ENCODE measurements at regions of chr6 and their contacts with region 1.

Region 1: DNA sequence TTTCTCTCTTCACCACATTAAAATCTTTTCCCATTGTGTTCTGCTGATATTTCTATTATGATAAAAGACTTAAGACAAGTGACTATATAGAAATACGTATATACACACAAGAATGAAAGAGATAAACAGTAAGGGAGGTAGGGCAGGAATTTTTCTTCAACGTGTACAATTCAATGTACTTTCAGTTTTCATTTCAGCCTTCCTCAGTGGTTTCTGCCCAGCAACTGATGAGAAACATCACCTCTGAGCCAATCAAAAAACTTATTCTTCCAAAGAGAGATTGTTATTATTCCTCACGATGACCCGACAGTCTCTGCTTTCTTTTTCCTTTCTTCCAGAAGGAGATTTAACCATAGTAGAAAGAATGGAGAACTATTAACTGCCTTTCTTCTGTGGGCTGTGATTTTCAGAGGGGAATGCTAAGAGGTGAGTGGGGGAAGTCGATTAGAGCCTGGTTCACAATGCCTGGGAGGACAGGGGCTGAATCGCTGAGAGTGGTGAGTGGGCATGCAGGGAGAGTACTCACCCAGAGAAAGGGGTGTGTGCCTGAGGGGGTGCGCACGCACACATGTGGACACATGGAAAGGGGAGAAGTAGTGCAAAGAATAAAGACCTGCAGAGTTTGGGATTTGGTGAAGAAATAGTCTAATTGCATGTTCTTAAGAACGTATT is at the start of gene BTN3A1:
- DNase-seq: peak; percentile 70
- ATAC-seq: peak; percentile 97
- H3K4me3 ChIP-seq: peak within 1 kb of the TSS; percentile 96
- H3K27ac ChIP-seq: peak within 1 kb of the TSS; percentile 72
- H3K4me1 ChIP-seq: peaks cover 5% of the 10 kb centered on the region; the same call in 1 of the 2 replicates
- H3K27me3 ChIP-seq: no peaks in the 10 kb centered on the region
- CTCF ChIP-seq: no peak
- POLR2A ChIP-seq: peak; percentile 46; the same call in 1 of the 2 replicates
- RAD21 ChIP-seq: 0 out of 2 replicates have a peak, but pooled peaks have one; percentile 13
- total RNA-seq, gene BTN3A1: 15.3 and 16.5 TPM in 2 replicates

Region 2: DNA sequence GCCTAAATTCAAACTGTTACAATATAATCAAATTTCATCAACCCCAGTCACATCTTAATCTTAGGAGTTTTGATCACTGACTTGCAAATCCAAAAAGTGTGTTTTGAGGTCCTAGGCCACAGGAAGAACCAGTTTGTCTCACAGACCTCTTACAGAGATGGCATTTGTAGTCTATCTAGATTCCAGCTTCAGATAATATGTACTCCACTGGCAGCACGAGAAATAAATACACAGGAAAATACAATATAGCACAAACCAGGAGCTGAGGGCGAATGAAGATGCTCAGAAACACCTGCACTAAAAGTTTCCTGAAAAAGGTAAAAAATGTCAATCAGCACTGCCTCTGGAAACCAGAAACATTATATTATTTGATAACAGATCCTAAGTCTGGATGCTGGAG is 37.5 kb after region 1 on chr6:
- CTCF ChIA-PET with region 1: no interaction called
- POLR2A ChIA-PET with region 1: no interaction called
- dilution Hi-C with region 1: no loop called
- in situ Hi-C with region 1: no loop called
- intact Hi-C with region 1: loop called (anchors 1 kb)
- DNase-seq: no peak
- ATAC-seq: no peak
- H3K4me3 ChIP-seq: peak overlapping the region; percentile 99; the same call in 1 of the 2 replicates
- H3K27ac ChIP-seq: peak overlapping the region; percentile 41; the same call in 1 of the 2 replicates
- H3K4me1 ChIP-seq: peaks cover 3% of the 10 kb centered on the region
- H3K27me3 ChIP-seq: no peaks in the 10 kb centered on the region
- CTCF ChIP-seq: no peak
- POLR2A ChIP-seq: no peak
- RAD21 ChIP-seq: no peak

Measured in IMR-90 (cell line).